ENCODE measurements at regions of chr5 and their contacts with region 1.

Region 1: GRCh38 chr5:14775857-14776256 is 95.7 kb downstream of the ANKH start:
- DNase-seq: no peak
- ATAC-seq: no peak
- H3K4me3 ChIP-seq: no peak overlapping the region
- H3K27ac ChIP-seq: peak overlapping the region; percentile 24
- H3K4me1 ChIP-seq: peaks cover 73% of the 10 kb centered on the region
- H3K27me3 ChIP-seq: no peaks in the 10 kb centered on the region
- CTCF ChIP-seq: no peak
- EP300 ChIP-seq: no peak
- POLR2A ChIP-seq: no peak
- RAD21 ChIP-seq: no peak

Region 2: DNA sequence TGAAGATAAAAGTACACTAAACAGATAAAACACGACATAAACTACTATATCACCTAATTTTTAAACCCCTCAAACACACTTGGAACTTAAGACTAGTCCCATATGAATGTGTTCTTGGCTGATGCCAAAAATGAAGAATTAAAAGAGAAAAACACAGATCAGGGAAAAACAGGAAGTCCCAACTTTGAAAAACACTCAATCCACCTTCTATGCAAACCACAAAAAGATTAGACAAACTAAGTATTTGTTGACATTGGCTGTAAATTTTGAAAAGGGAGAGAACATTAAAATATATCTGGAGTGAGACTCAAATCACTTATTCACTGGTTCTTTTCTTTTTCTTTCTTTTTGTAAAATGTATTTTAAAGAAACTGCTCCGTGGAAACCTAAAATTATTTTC is 14.4 kb after region 1 on chr5:
- CTCF ChIA-PET with region 1: no interaction called
- POLR2A ChIA-PET with region 1: no interaction called
- in situ Hi-C with region 1: no loop called
- intact Hi-C with region 1: no loop called
- DNase-seq: no peak
- ATAC-seq: no peak
- H3K4me3 ChIP-seq: no peak overlapping the region
- H3K27ac ChIP-seq: no peak overlapping the region
- H3K4me1 ChIP-seq: peaks cover 30% of the 10 kb centered on the region
- H3K27me3 ChIP-seq: no peaks in the 10 kb centered on the region
- CTCF ChIP-seq: no peak
- EP300 ChIP-seq: no peak
- POLR2A ChIP-seq: no peak
- RAD21 ChIP-seq: no peak

Region 3: DNA sequence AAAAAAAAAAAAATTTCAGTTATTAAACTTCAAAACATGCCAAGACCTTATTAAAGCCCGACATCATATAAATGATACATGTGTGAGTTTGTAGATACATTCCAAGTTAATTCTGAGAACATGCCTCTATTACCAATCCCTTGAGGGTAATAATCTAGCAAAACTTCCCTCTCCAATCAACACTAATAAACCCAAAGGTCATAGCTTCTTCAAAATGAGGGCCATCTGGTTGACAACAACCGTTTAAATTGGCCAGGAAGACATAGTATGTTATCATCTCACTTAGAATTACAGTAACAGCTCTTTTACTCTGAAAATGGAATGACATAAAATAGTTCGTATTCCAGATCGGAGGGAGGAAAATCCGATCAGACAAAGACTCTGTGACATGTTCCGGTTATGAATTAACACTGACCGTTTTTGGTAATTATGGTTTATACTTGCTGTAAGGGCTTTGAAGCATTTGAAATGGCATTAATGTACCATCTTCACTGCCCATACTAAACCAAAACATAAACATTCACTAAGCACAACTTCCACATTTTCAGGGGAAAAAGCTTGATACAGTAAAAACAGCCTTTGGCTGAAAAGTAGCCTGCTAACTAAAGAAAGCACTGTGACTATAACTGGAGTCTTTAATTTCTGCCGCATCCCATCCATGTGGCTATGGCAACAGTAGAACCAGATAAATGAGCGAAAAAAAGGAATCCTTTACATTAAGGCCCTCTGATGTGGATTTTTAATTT is 45.4 kb after region 1 on chr5:
- CTCF ChIA-PET with region 1: no interaction called
- POLR2A ChIA-PET with region 1: no interaction called
- in situ Hi-C with region 1: no loop called
- intact Hi-C with region 1: no loop called
- DNase-seq: no peak
- ATAC-seq: no peak
- H3K4me3 ChIP-seq: no peak overlapping the region
- H3K27ac ChIP-seq: no peak overlapping the region
- H3K4me1 ChIP-seq: peaks cover 17% of the 10 kb centered on the region
- H3K27me3 ChIP-seq: no peaks in the 10 kb centered on the region
- CTCF ChIP-seq: no peak
- EP300 ChIP-seq: no peak
- POLR2A ChIP-seq: no peak
- RAD21 ChIP-seq: no peak

Region 4: DNA sequence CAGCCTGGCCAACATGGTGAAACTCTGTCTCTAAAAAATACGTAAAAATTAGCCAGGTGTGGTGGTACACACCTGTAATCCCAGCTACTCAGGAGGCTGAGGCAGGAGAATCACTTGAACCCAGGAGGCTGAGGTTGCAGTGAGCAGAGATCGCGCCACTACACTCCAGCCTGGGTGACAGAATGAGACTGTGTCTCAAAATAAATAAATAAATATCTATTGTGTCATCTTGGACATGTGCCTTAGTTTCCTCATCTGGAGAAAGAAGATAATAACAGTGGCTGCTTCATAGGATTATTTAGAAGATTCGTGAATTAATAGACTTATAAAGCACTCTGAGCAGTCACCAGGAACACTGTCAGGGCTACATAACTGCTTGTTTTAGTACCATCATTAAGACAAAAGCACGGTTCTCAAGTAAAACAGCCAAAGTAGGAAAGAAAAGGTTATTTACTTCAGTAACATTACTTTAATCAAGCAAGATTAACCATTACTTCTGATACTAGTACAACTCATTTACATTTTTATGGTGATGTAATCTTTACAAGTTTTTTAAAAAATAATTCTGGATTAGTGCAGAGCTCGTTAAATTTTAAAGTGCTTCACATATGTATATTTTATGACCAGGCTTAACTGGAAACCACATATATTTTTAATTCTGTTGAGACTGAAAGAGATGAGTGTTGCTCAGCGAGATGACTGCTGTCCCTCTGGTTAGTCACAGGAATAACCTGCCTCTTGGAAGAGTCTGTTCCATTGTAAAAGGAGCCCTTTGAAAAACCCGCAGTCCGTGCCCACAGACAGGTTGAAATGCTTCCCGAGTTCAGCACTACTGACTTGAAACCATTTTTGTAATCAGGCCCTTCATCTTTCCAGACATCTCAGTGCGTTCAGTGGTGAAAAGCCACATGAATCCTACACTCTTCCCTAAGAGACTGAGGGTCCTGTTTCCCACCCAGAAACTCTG is 59.0 kb after region 1 on chr5:
- CTCF ChIA-PET with region 1: no interaction called
- POLR2A ChIA-PET with region 1: no interaction called
- in situ Hi-C with region 1: no loop called
- intact Hi-C with region 1: no loop called
- DNase-seq: no peak
- ATAC-seq: no peak
- H3K4me3 ChIP-seq: no peak overlapping the region
- H3K27ac ChIP-seq: no peak overlapping the region
- H3K4me1 ChIP-seq: no peaks in the 10 kb centered on the region
- H3K27me3 ChIP-seq: no peaks in the 10 kb centered on the region
- CTCF ChIP-seq: no peak
- EP300 ChIP-seq: no peak
- POLR2A ChIP-seq: no peak
- RAD21 ChIP-seq: no peak

Region 5: DNA sequence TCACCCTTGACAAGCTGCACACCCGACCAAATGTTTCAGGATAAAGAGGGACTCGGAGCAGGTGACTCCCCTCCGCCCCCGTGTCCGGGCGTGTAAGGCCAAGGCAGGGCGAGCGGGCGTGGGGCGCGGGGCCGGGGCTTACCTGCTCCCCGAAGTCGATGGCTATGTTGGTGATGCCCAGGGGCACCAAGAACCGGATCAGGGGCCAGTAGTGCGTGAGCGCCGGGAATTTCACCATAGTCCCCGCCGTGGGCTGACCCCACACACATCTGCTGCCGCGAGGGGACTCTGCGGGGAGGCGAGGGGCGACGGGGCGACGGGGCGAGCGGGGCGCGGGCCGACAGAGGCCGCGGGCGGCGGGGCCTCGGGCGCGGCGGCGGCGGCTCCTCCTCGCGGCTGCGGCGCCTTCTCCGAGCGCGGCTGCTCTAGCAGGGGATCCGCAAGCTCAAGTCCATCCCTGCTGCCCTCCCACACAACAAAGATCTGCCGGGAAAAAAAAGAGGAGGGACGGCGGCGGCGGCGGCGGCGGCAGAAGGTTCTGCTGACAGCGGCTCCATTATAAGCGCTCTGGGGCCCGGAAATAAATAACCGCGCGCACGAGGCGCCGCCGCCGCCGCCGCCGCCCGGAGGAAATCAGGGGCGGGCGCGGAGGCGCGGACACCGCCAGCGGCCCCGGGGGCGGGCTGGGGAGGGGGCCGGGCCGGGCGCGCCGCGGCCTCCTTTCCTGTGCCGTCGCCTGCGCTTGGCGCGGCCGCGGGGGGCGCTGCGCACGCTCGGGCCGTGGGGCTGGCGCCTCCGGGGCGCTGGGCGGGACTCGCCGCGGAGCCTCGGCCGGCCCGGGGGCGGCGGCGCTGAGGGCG is 95.6 kb after region 1 on chr5 and contains the start of gene ANKH:
- CTCF ChIA-PET with region 1: no interaction called
- POLR2A ChIA-PET with region 1: no interaction called
- in situ Hi-C with region 1: no loop called
- intact Hi-C with region 1: loop called (anchors 5 kb)
- DNase-seq: peak; percentile 51
- ATAC-seq: peak; percentile 88
- H3K4me3 ChIP-seq: peak within 1 kb of the TSS; percentile 80 to 93 (median 88)
- H3K27ac ChIP-seq: peak within 1 kb of the TSS; percentile 54
- H3K4me1 ChIP-seq: peaks cover 46% of the 10 kb centered on the region
- H3K27me3 ChIP-seq: no peaks in the 10 kb centered on the region; a peak in 2 of 5 replicates
- CTCF ChIP-seq: no peak; the same call in 1 of the 2 replicates
- EP300 ChIP-seq: no peak
- POLR2A ChIP-seq: no peak
- RAD21 ChIP-seq: no peak
- total RNA-seq, gene ANKH: 20.5 and 25.0 TPM in 2 replicates